ENCODE measurements at regions of chr12 and their contacts with region 1.

Region 1: GRCh38 chr12:85424581-85425348 is 144.7 kb downstream of the ALX1 start:
- DNase-seq: peak; percentile 70

Region 2: GRCh38 chr12:85155787-85156186 is 269.0 kb before region 1 on chr12:
- in situ Hi-C with region 1: loop called (anchors 25 kb)
- DNase-seq: peak; percentile 82

Measured in SK-MEL-5 (cell line).